Tibial artery (tissue), 4 donors: ENCODE measurements at regions of chr2 and their contacts with region 1.

Region 1: DNA sequence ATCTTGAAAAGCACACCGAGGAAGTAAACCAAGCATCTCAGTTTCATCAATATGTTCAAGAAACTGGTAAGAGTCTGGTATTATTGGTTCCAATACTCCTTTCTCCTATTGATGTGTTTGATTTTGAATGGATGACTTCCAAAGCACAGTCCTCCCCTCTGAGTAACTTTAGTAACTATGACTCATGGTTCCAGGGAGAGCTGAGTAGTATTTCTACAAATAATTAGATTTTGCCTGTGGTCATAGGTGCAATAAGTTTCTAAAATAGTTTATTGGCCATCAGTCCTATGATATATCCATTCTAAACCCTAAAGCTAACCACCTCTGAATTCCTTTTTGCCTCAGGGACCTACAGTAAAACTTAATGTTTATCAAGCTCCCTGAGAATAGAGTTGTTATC is 352.4 kb downstream of the XIRP2 start:
- DNase-seq: no peak
- H3K4me3 ChIP-seq: no peak overlapping the region
- H3K27ac ChIP-seq: no peak overlapping the region
- H3K4me1 ChIP-seq: no peaks in the 10 kb centered on the region
- H3K27me3 ChIP-seq: no peaks in the 10 kb centered on the region
- CTCF ChIP-seq: no peak

Region 2: GRCh38 chr2:166901336-166901735 is 339.3 kb before region 1 on chr2:
- intact Hi-C with region 1: no loop called
- DNase-seq: no peak
- H3K4me3 ChIP-seq: no peak overlapping the region
- H3K27ac ChIP-seq: no peak overlapping the region
- H3K4me1 ChIP-seq: no peaks in the 10 kb centered on the region
- H3K27me3 ChIP-seq: no peaks in the 10 kb centered on the region
- CTCF ChIP-seq: no peak

Region 3: DNA sequence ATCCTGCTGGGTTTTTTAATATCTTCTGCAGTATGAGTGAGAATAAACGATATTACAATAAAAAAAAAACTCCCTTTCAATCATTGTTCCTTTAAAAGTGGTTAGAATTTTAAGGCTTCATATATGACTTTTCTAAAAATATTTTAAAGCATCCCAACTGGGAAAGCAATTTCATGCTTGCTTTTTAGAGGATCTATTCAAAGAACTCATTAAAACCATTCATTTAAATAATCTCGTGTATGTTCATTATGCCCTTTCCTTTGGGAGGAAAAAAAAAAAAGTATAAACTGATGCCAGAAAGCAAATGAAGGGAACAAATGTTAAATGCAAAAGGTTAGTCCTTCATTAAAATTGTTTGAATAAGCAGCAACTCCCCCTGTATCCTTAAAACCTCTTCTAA is 271.2 kb before region 1 on chr2:
- intact Hi-C with region 1: loop called (anchors 5 kb)
- DNase-seq: no peak
- H3K4me3 ChIP-seq: no peak overlapping the region
- H3K27ac ChIP-seq: no peak overlapping the region
- H3K4me1 ChIP-seq: no peaks in the 10 kb centered on the region
- H3K27me3 ChIP-seq: no peaks in the 10 kb centered on the region
- CTCF ChIP-seq: no peak